ENCODE measurements at regions of chr12 and their contacts with region 1.

Region 1: GRCh38 chr12:13255792-13256691 is 59.5 kb downstream of the EMP1 start:
- DNase-seq: peak; percentile 97
- H3K4me3 ChIP-seq: peak overlapping the region; percentile 42 to 52 (median 46)
- H3K27ac ChIP-seq: no peak overlapping the region
- H3K4me1 ChIP-seq: peaks cover 4 to 11% (median 8%) of the 10 kb centered on the region in 4 donors
- H3K27me3 ChIP-seq: no peaks in the 10 kb centered on the region
- CTCF ChIP-seq: peak in 2 of 3 experiments; percentile 92 to 97
- EP300 ChIP-seq: no peak
- POLR2A ChIP-seq: no peak

Region 2: DNA sequence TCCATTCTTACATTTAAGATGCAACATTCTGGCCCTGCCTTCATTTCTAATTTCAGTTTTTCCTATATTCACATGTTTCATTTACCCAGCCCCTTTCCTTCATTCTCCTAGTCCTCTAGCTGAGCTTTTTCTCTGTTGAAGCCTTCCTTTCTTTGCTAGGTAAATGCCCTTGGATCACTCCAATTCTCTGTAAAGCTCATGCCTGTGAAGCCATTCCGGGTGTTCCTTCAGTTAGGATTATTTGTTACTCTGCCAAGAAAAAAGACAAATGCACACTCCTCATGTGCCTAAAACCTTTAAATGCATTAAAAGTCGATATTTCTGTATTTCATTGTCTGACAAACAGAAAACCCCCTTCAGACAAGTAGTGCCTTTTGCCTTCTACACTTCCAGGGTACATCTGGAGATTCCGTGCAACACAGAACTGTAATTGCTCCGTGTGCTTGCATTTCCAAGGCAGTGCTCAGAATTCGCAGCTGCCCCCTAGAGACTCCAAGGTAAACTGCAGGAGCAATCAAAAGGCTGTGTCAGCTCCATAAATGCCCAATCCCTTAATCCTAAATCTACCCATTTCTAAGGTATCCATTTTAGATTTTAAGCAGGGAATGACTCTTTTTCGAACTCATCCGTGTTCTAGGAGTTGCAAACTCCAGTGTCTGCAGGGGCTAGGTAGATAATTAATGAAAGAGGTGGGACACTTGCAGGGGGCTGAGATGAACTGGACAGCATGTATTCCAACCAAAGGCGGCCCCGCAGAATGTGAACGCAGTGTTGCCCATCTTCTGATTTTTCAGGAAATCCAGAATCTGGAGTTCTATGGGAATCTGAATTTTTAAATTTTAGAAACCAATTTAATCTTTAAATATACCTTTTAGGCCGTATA is 405.2 kb after region 1 on chr12:
- intact Hi-C with region 1: loop called (anchors 5 kb)
- DNase-seq: no peak
- H3K4me3 ChIP-seq: no peak overlapping the region
- H3K27ac ChIP-seq: no peak overlapping the region
- H3K4me1 ChIP-seq: no peaks in the 10 kb centered on the region
- H3K27me3 ChIP-seq: no peaks in the 10 kb centered on the region
- CTCF ChIP-seq: peak; percentile 61 to 85 (median 65)
- EP300 ChIP-seq: no peak
- POLR2A ChIP-seq: no peak